Activated CD4-positive, alpha-beta T cell treated with anti-CD3 and anti-CD28 coated beads for 36 hours (primary cell): ENCODE measurements at regions of chr2 and their contacts with region 1.

Region 1: GRCh38 chr2:176140513-176141317 is 10.6 kb upstream of the HOXD4 start:
- DNase-seq: peak; percentile 85
- ATAC-seq: peak; percentile 93
- H3K4me3 Mint-ChIP-seq: no peak overlapping the region
- H3K27ac Mint-ChIP-seq: no peak overlapping the region
- H3K4me1 Mint-ChIP-seq: peaks cover 17% of the 10 kb centered on the region
- H3K27me3 Mint-ChIP-seq: peaks cover 77% of the 10 kb centered on the region

Region 2: GRCh38 chr2:175837046-175837445 is 303.7 kb before region 1 on chr2:
- CTCF ChIA-PET with region 1: no interaction called
- POLR2A ChIA-PET with region 1: no interaction called
- intact Hi-C with region 1: no loop called
- DNase-seq: no peak
- ATAC-seq: no peak
- H3K4me3 Mint-ChIP-seq: no peak overlapping the region
- H3K27ac Mint-ChIP-seq: no peak overlapping the region
- H3K4me1 Mint-ChIP-seq: no peaks in the 10 kb centered on the region
- H3K27me3 Mint-ChIP-seq: peaks cover 14% of the 10 kb centered on the region

Region 3: GRCh38 chr2:176174824-176175708 is 34.4 kb after region 1 on chr2:
- CTCF ChIA-PET with region 1: interaction called, 8 read pairs
- POLR2A ChIA-PET with region 1: no interaction called
- intact Hi-C with region 1: loop called in 1 of 2 experiments (anchors 5 kb)
- DNase-seq: peak; percentile 64
- ATAC-seq: peak; percentile 69
- H3K4me3 Mint-ChIP-seq: no peak overlapping the region
- H3K27ac Mint-ChIP-seq: no peak overlapping the region
- H3K4me1 Mint-ChIP-seq: peaks cover 25% of the 10 kb centered on the region
- H3K27me3 Mint-ChIP-seq: peaks cover 78% of the 10 kb centered on the region

Region 4: DNA sequence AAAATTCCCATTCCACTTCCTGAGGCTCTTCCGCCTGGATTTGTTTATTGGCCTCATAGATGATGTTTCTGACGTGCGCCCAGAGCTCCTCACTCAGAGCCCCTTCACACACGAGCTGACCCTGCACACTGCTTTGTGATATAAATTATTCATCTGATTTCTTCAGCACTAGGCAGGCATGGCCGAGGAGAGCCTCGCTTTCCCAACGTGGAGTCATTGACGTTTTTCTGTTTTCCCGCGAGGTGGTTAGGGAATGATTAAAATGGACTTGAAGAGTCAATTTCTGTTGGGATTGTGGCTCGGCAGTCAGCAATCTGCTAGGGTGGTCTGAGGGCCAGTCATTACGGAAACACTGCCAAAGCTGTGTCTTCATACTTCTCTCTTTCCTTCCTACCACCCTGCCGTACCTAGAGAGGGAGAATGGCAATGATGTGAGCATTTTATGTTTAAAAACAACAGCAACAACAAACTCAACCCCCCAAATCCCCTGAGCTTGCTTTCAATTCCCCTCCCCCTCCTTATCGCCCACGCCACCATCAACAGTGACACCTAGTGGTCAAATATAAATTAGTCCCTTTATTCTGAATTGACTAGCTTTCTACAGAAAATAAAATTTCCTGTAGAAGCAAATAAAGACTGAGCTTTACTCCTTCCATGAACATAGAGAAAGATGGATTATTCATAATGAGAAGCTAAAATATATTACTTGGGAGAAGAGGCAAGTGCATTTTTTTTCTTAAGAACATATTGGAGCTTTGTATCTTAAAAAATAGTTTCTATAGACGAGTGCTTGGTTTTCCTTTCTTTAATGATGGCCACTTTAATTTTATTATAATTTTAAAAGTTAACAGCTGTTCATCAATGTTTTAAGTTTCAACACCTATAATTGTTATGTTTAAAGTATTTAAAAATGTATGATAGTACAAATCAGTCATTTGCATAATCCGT is 413.7 kb after region 1 on chr2:
- CTCF ChIA-PET with region 1: interaction called, 11 read pairs
- POLR2A ChIA-PET with region 1: no interaction called
- intact Hi-C with region 1: loop called (anchors 1 kb)
- DNase-seq: peak; percentile 56
- ATAC-seq: peak; percentile 49
- H3K4me3 Mint-ChIP-seq: peak overlapping the region; percentile 60
- H3K27ac Mint-ChIP-seq: peak overlapping the region; percentile 26
- H3K4me1 Mint-ChIP-seq: peaks cover 11% of the 10 kb centered on the region
- H3K27me3 Mint-ChIP-seq: peaks cover 33% of the 10 kb centered on the region

Region 5: GRCh38 chr2:176653479-176654443 is 513.0 kb after region 1 on chr2:
- CTCF ChIA-PET with region 1: interaction called, 16 read pairs
- POLR2A ChIA-PET with region 1: no interaction called
- intact Hi-C with region 1: loop called in 1 of 2 experiments (anchors 1 kb)
- DNase-seq: peak; percentile 60
- ATAC-seq: peak; percentile 69
- H3K4me3 Mint-ChIP-seq: no peak overlapping the region
- H3K27ac Mint-ChIP-seq: no peak overlapping the region
- H3K4me1 Mint-ChIP-seq: peaks cover 8% of the 10 kb centered on the region
- H3K27me3 Mint-ChIP-seq: peaks cover 41% of the 10 kb centered on the region